CD8-positive, alpha-beta T cell (primary cell): ENCODE measurements at regions of chr3 and their contacts with region 1.

Region 1: GRCh38 chr3:19866751-19867347 is 67.2 kb downstream of the EFHB start:
- DNase-seq: peak in 5 of 9 experiments; percentile 22 to 56 (median 44)
- ATAC-seq: no peak
- H3K4me3 ChIP-seq: no peak overlapping the region
- H3K4me3 Mint-ChIP-seq: no peak overlapping the region
- H3K27ac ChIP-seq: no peak overlapping the region
- H3K27ac Mint-ChIP-seq: no peak overlapping the region
- H3K4me1 ChIP-seq: no peaks in the 10 kb centered on the region
- H3K4me1 Mint-ChIP-seq: no peaks in the 10 kb centered on the region
- H3K27me3 ChIP-seq: no peaks in the 10 kb centered on the region
- H3K27me3 Mint-ChIP-seq: peaks cover 13% of the 10 kb centered on the region
- CTCF ChIP-seq: peak; percentile 80

Region 2: GRCh38 chr3:19046440-19046839 is 820.4 kb before region 1 on chr3:
- CTCF ChIA-PET with region 1: interaction called, 4 read pairs
- POLR2A ChIA-PET with region 1: no interaction called
- intact Hi-C with region 1: loop called (anchors 2 to 5 kb)
- DNase-seq: peak in 1 of 9 experiments; percentile 3
- ATAC-seq: no peak
- H3K4me3 ChIP-seq: no peak overlapping the region
- H3K4me3 Mint-ChIP-seq: no peak overlapping the region
- H3K27ac ChIP-seq: no peak overlapping the region
- H3K27ac Mint-ChIP-seq: no peak overlapping the region
- H3K4me1 ChIP-seq: no peaks in the 10 kb centered on the region
- H3K4me1 Mint-ChIP-seq: no peaks in the 10 kb centered on the region
- H3K27me3 ChIP-seq: no peaks in the 10 kb centered on the region
- H3K27me3 Mint-ChIP-seq: peaks cover 3% of the 10 kb centered on the region
- CTCF ChIP-seq: peak; percentile 20

Region 3: DNA sequence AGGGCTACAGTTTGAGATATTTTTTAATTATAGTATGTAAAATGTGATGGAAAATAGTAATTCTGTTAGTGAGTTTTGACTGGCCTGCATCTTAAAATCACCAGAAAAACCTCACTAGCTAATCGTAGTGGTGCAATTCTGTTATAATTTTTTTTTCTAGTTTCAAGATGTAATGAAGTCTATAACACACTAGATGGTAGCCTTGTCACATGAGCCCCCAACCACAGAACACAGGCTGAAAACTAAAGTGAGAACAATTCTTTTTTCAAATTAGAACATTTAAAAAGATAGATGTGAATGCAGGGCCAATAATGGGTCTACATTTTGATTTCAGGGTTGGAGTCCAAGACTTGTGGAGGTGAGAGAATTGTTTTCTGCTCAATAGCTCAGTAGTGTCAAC is 801.8 kb before region 1 on chr3:
- CTCF ChIA-PET with region 1: interaction called, 6 read pairs
- POLR2A ChIA-PET with region 1: no interaction called
- intact Hi-C with region 1: loop called in 1 of 2 experiments (anchors 2 kb)
- DNase-seq: peak in 2 of 9 experiments; percentile 6 to 34
- ATAC-seq: no peak
- H3K4me3 ChIP-seq: no peak overlapping the region
- H3K4me3 Mint-ChIP-seq: no peak overlapping the region
- H3K27ac ChIP-seq: no peak overlapping the region
- H3K27ac Mint-ChIP-seq: no peak overlapping the region
- H3K4me1 ChIP-seq: no peaks in the 10 kb centered on the region
- H3K4me1 Mint-ChIP-seq: no peaks in the 10 kb centered on the region
- H3K27me3 ChIP-seq: no peaks in the 10 kb centered on the region
- H3K27me3 Mint-ChIP-seq: peaks cover 2% of the 10 kb centered on the region
- CTCF ChIP-seq: peak; percentile 40

Region 4: GRCh38 chr3:19877656-19878055 is 10.8 kb after region 1 on chr3:
- CTCF ChIA-PET with region 1: interaction called, 10 read pairs
- POLR2A ChIA-PET with region 1: no interaction called
- intact Hi-C with region 1: no loop called
- DNase-seq: no peak
- ATAC-seq: no peak
- H3K4me3 ChIP-seq: no peak overlapping the region
- H3K4me3 Mint-ChIP-seq: no peak overlapping the region
- H3K27ac ChIP-seq: no peak overlapping the region
- H3K27ac Mint-ChIP-seq: no peak overlapping the region
- H3K4me1 ChIP-seq: no peaks in the 10 kb centered on the region
- H3K4me1 Mint-ChIP-seq: no peaks in the 10 kb centered on the region
- H3K27me3 ChIP-seq: no peaks in the 10 kb centered on the region
- H3K27me3 Mint-ChIP-seq: peaks cover 4% of the 10 kb centered on the region
- CTCF ChIP-seq: no peak

Region 5: DNA sequence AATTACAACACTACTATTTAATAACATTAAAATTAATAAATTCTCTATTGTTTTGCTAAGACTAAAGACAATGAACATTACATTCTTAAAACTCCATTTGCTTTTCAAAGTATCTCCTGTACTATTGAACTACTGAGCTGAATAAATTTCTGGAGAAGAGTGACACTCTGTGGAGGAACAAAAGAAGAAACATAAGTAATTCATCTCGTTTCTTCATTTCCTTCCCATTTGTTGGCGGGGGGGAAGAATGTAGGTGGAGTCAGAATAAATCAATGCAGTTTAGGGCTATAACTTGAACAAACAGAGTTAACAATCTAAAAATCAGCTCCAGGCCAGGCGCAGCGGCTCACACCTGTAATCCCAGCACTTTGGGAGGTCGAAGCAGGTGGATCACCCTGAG is 34.5 kb after region 1 on chr3:
- CTCF ChIA-PET with region 1: no interaction called
- POLR2A ChIA-PET with region 1: no interaction called
- intact Hi-C with region 1: no loop called
- DNase-seq: no peak
- ATAC-seq: no peak
- H3K4me3 ChIP-seq: no peak overlapping the region
- H3K4me3 Mint-ChIP-seq: no peak overlapping the region
- H3K27ac ChIP-seq: no peak overlapping the region
- H3K27ac Mint-ChIP-seq: no peak overlapping the region
- H3K4me1 ChIP-seq: no peaks in the 10 kb centered on the region
- H3K4me1 Mint-ChIP-seq: no peaks in the 10 kb centered on the region
- H3K27me3 ChIP-seq: no peaks in the 10 kb centered on the region
- H3K27me3 Mint-ChIP-seq: no peaks in the 10 kb centered on the region
- CTCF ChIP-seq: no peak

Region 6: GRCh38 chr3:20194793-20195460 is 328.1 kb after region 1 on chr3:
- CTCF ChIA-PET with region 1: no interaction called
- POLR2A ChIA-PET with region 1: no interaction called
- intact Hi-C with region 1: no loop called
- DNase-seq: no peak
- ATAC-seq: no peak
- H3K4me3 ChIP-seq: no peak overlapping the region
- H3K4me3 Mint-ChIP-seq: no peak overlapping the region
- H3K27ac ChIP-seq: no peak overlapping the region
- H3K27ac Mint-ChIP-seq: no peak overlapping the region
- H3K4me1 ChIP-seq: no peaks in the 10 kb centered on the region
- H3K4me1 Mint-ChIP-seq: peaks cover 4% of the 10 kb centered on the region
- H3K27me3 ChIP-seq: no peaks in the 10 kb centered on the region
- H3K27me3 Mint-ChIP-seq: no peaks in the 10 kb centered on the region
- CTCF ChIP-seq: no peak